ENCODE measurements at regions of chr4 and their contacts with region 1.

Region 1: DNA sequence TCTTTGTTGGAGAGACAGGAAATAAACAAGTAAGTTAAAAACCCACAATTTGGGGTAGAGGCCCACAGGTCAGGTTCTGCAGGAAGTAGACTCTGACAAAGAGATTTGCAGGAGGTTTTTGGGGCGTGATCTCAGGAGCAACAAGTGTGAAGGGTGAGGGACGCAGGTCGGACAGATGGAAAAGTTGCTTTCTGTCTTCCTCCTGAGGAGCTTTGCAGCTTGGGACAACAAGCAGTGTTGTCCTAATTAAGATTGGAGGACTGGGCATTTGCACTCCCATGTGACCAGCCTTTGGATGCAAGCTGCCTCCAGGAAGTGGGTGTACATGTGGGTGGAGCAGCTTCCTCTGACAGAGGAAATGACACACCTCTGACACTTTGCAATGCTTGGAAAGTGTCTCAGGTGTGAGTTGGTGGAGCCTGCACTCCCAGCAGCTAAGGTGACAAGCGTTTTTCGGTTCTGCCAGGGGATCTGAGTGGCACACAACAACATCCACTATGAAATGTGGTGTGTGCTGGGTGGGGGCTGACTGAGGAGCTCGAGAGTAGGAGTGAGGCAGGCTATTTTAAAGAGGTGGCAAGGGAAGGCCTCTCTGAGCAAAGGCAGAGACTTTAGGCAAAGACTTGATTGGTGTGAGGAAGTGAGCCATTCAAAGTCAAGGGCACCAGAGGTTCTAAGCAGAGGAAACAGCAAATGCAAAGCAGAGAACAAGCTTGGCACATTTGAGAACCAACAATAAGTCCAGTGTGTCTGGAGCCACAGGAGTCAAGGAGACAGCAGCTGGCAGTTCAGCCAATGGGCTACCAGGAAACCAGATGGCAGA is 339.8 kb upstream of the GATB start:
- DNase-seq: peak; percentile 41 to 95 (median 88)
- ATAC-seq: peak; percentile 80 to 86
- H3K4me3 Mint-ChIP-seq: peak overlapping the region; percentile 80 to 94 (median 88)
- H3K27ac Mint-ChIP-seq: peak overlapping the region; percentile 96 to 100 (median 98)
- H3K4me1 Mint-ChIP-seq: peaks cover 53 to 96% (median 94%) of the 10 kb centered on the region in 4 donors
- H3K27me3 Mint-ChIP-seq: no peaks in the 10 kb centered on the region

Region 2: GRCh38 chr4:151833174-151833573 is 267.4 kb before region 1 on chr4:
- POLR2A ChIA-PET with region 1: no interaction called
- DNase-seq: no peak
- ATAC-seq: no peak
- H3K4me3 Mint-ChIP-seq: no peak overlapping the region
- H3K27ac Mint-ChIP-seq: no peak overlapping the region
- H3K4me1 Mint-ChIP-seq: peaks cover 0 to 1% (median 0%) of the 10 kb centered on the region in 4 donors
- H3K27me3 Mint-ChIP-seq: no peaks in the 10 kb centered on the region

Region 3: DNA sequence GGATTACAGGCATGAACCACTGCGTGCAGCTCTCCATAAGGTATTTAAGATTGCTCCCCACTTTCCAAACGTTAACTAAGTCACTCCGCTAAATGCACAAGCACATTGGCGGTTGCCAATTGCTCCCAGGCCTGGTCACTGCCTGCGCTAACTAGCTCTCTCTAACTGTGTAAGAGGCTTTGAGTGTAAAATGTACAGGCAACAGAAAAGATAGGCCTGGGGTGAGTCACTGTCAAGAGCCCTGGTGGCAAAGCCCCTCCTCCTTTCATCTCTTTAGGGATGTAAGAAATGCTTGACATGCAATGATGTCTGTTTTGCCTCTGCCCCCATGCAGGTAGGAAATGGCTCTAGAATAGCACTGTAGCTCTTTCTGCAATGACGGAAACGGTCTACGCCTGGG is 10.0 kb before region 1 on chr4:
- POLR2A ChIA-PET with region 1: interaction called, 22 read pairs
- DNase-seq: peak in 7 of 10 donors; percentile 12 to 72 (median 25)
- ATAC-seq: peak; percentile 81 to 86
- H3K4me3 Mint-ChIP-seq: peak overlapping the region in 7 of 10 donors; percentile 12 to 77 (median 66)
- H3K27ac Mint-ChIP-seq: peak overlapping the region; percentile 27 to 97 (median 87)
- H3K4me1 Mint-ChIP-seq: peaks cover 39 to 80% (median 56%) of the 10 kb centered on the region in 4 donors
- H3K27me3 Mint-ChIP-seq: no peaks in the 10 kb centered on the region

Region 4: DNA sequence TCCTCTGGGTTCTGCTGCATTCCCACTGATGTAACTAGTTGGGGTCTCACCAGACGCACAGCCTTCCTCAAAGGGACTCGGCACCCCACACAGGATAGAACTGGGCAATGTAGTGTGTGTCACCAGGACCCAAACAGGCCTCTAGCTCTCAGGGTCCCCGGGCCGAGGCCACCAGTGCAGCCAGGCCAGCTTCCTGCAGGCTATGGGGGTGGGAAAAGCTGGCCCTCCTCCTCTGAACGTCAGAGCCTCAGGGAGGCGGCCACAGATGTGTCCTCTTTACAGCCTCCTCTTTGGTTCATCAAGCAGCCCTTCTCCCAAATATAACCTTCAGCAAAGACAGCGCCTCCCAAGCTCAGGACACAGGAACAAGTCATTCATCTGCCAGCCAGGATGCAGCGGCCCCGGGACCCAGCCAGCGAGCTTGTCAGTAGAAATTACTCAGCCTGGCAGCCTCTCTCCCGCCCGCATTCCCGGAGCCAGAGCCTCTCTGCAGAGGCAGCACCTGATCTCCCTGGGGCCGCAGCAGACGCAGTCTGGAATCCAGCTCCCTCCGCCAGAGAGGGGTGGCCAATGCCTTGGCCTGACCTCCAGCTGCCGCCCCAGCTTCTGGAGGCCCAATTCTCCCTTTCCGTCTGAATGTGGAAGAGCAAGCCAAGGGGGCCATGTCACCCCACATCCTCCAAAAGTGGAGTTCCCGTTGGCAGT is 146.8 kb after region 1 on chr4:
- POLR2A ChIA-PET with region 1: interaction called, 11 read pairs
- DNase-seq: no peak
- ATAC-seq: no peak
- H3K4me3 Mint-ChIP-seq: peak overlapping the region in 2 of 10 donors; percentile 20 to 43
- H3K27ac Mint-ChIP-seq: peak overlapping the region in 7 of 10 donors; percentile 19 to 85 (median 62)
- H3K4me1 Mint-ChIP-seq: peaks cover 26 to 56% (median 37%) of the 10 kb centered on the region in 4 donors
- H3K27me3 Mint-ChIP-seq: no peaks in the 10 kb centered on the region

Region 5: DNA sequence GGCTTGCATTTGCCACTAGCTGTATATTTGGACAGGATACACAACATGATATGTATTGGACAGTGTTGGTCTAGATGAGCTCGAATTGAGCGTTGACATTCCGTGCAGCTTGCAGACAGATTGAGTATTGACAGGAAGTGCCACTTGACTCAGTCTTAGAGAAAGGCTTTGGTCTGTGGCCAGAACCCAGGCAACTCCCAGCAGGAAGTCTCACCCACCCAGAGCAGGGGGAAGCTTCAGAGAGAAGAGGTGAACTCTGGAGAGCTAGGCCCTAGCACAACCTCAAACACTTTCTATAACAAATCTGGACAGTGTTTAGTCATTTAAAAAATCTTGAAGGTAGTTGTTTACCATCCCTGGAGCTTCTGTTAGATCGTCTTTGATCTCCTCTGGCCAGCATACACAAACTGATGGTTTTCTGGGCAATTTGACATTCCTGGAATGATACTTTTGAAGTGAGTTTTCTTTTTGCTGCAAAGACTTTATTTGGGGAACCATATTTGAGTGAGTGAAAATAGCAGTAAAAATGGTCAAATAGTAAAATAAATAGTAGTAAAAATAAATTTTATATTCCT is 154.9 kb after region 1 on chr4:
- POLR2A ChIA-PET with region 1: interaction called, 20 read pairs
- DNase-seq: peak in 9 of 10 donors; percentile 20 to 78 (median 59)
- ATAC-seq: peak; percentile 99
- H3K4me3 Mint-ChIP-seq: no peak overlapping the region
- H3K27ac Mint-ChIP-seq: no peak overlapping the region
- H3K4me1 Mint-ChIP-seq: peaks cover 6 to 21% (median 13%) of the 10 kb centered on the region in 4 donors
- H3K27me3 Mint-ChIP-seq: no peaks in the 10 kb centered on the region

Measured in naive thymus-derived CD8-positive, alpha-beta T cell (primary cell).